ENCODE measurements at regions of chr17 and their contacts with region 1.

Region 1: GRCh38 chr17:59155439-59156182 is at the start of gene PRR11:
- DNase-seq: peak in 6 of 9 donors; percentile 62 to 99 (median 98)
- ATAC-seq: peak; percentile 91
- H3K4me3 ChIP-seq: peak within 1 kb of the TSS; percentile 89
- H3K4me3 Mint-ChIP-seq: no peak within 1 kb of the TSS
- H3K27ac ChIP-seq: peak within 1 kb of the TSS; percentile 75
- H3K27ac Mint-ChIP-seq: no peak within 1 kb of the TSS
- H3K4me1 ChIP-seq: peaks cover 10 to 13% of the 10 kb centered on the region in 2 donors
- H3K4me1 Mint-ChIP-seq: peaks cover 8 to 52% (median 36%) of the 10 kb centered on the region in 7 donors
- H3K27me3 ChIP-seq: no peaks in the 10 kb centered on the region
- H3K27me3 Mint-ChIP-seq: no peaks in the 10 kb centered on the region
- total RNA-seq, gene PRR11: 0.61 to 41.9 (median 1.00) TPM

Region 2: DNA sequence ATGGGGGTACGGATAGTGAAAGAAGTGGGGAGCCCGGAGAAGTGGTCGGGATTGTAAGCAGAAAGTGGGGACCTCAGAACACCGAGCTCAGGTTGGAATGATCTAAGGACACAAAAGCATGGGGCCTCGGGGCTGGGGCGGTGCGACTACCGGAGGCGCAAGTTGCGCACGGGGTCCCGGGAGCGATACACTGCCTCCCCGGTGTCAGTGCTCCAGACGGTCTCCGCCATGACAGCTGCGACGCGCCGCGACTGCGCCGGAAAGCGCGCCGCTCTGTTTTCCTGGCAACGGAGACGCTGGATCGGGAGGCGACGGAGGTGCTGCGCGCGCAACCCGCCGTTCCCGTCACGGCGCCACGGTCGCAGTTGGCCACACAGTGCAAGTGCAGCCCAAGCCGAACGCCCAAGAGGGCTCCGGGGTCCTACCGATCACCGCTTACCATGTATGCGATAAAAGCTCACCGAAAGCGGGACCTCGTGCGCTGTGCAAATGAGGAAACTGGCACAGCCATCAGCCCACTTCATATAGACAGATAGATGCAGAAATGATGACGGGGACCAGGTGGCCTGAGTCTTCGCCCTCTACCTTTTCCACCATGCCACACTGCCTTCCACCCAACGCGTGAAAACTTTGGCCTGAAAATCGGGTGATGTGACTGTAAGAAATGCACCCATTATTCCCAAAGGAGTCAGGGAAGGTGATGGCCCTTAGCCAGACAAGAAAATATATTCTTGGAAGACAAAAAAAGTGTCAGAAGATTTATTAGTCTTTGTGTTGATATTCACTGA is 936.4 kb before region 1 on chr17 and contains the start of gene MKS1:
- CTCF ChIA-PET with region 1: no interaction called
- POLR2A ChIA-PET with region 1: no interaction called
- intact Hi-C with region 1: loop called in 1 of 2 experiments (anchors 1 kb)
- DNase-seq: peak; percentile 90 to 96 (median 94)
- ATAC-seq: peak; percentile 98
- H3K4me3 ChIP-seq: peak within 1 kb of the TSS; percentile 68
- H3K4me3 Mint-ChIP-seq: peak within 1 kb of the TSS; percentile 86 to 96 (median 94)
- H3K27ac ChIP-seq: peak within 1 kb of the TSS; percentile 77
- H3K27ac Mint-ChIP-seq: peak within 1 kb of the TSS; percentile 92 to 98 (median 97)
- H3K4me1 ChIP-seq: peaks cover 8 to 9% of the 10 kb centered on the region in 2 donors
- H3K4me1 Mint-ChIP-seq: peaks cover 7 to 33% (median 23%) of the 10 kb centered on the region in 7 donors
- H3K27me3 ChIP-seq: no peaks in the 10 kb centered on the region
- H3K27me3 Mint-ChIP-seq: peaks cover 0 to 18% (median 0%) of the 10 kb centered on the region in 5 donors
- total RNA-seq, gene MKS1: 10.0 to 29.1 (median 19.7) TPM

Region 3: DNA sequence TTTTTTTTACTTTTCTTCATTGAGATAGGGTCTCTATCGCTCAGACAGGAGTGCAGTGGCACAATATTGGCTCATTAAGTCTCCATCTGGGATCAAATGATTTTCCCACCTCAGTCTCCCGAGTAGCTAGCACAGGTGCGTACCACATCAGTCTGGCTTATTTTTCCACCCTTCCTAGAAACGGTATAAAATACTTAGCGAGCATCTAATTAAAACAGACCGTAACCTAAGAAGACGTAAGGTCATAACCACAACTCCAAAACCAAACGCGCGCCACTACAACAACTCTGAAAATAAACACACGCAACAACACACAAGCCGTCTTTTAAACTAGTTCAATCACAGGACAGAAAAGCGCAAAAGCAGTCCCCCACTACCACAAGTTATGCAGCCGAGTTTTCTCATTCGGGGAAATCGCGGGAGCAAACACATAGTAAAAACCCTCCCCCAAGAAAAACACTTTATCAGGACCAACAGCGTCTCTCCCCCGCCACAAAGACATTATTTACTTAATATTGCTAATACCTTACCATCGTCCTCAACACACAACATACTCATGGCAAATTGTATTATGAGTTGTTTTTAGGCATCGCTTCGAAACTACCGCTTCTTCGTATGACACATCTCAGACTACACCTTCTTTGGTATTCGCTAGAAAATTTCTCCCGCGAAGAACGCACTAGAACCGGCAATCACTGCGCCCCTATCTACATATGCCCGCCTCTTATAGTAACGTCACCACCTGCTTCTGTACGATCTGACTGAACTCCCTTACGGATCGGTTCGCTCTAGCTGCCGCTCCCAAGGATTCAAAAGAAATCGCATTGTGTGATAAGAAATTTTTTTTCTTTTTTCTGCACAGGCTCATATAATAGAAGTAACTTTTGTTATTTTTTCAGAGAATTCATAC is 496.6 kb before region 1 on chr17:
- CTCF ChIA-PET with region 1: no interaction called
- POLR2A ChIA-PET with region 1: no interaction called
- intact Hi-C with region 1: loop called in 1 of 2 experiments (anchors 1 kb)
- DNase-seq: peak; percentile 47 to 89 (median 82)
- ATAC-seq: peak; percentile 88
- H3K4me3 ChIP-seq: peak overlapping the region; percentile 44
- H3K4me3 Mint-ChIP-seq: peak overlapping the region; percentile 83 to 93 (median 88)
- H3K27ac ChIP-seq: peak overlapping the region; percentile 82
- H3K27ac Mint-ChIP-seq: peak overlapping the region; percentile 94 to 100 (median 97)
- H3K4me1 ChIP-seq: no peaks in the 10 kb centered on the region
- H3K4me1 Mint-ChIP-seq: peaks cover 10 to 20% (median 15%) of the 10 kb centered on the region in 7 donors
- H3K27me3 ChIP-seq: no peaks in the 10 kb centered on the region
- H3K27me3 Mint-ChIP-seq: peaks cover 0 to 11% (median 0%) of the 10 kb centered on the region in 5 donors

Region 4: DNA sequence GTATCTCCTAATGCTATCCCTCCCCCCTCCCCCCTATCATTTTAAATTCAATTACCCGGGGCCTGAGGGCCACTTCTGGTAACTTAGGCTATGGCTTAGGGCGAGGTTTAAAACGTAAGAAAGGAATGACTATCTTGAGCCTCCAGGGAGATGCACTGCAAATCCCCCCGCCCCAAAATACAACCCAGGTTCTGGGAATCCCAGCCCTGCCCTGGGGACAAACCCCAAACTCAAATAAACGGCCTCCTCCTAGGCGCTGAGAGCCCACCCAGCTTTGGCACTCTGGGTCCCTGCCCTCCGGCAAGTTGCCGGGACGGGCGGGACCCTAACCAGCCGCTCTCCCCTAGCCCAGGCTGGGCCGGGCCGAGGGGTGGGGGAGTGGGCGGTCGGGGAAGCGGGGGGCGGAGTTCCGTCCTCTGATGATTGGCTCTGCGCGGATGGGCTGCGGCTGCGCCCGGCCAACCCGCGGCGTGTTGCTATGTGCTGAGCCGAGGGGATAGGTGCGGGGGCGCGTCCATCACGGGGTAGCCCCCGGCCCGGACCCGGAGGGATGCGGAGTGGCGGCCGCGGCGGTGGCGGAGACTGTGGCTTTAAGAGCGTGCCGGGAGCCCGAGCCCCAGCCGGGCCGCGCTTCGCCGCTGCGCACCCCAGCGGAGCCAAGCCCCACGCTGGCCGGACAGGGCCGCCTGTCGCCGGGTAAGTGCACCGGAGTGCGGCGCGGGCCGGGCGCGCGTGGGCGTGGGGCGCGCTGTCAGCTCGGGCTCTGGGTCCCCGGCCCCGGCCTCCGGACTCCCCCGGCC is 175.7 kb after region 1 on chr17 and contains the start of gene YPEL2:
- CTCF ChIA-PET with region 1: no interaction called
- POLR2A ChIA-PET with region 1: no interaction called
- intact Hi-C with region 1: loop called in 1 of 2 experiments (anchors 5 kb)
- DNase-seq: peak; percentile 77 to 92 (median 89)
- ATAC-seq: peak; percentile 96
- H3K4me3 ChIP-seq: peak within 1 kb of the TSS; percentile 67
- H3K4me3 Mint-ChIP-seq: peak within 1 kb of the TSS; percentile 89 to 96 (median 94)
- H3K27ac ChIP-seq: peak within 1 kb of the TSS; percentile 77
- H3K27ac Mint-ChIP-seq: peak within 1 kb of the TSS; percentile 77 to 98 (median 94)
- H3K4me1 ChIP-seq: peaks cover 30 to 55% of the 10 kb centered on the region in 2 donors
- H3K4me1 Mint-ChIP-seq: peaks cover 53 to 85% (median 79%) of the 10 kb centered on the region in 7 donors
- H3K27me3 ChIP-seq: no peaks in the 10 kb centered on the region
- H3K27me3 Mint-ChIP-seq: peaks cover 0 to 11% (median 0%) of the 10 kb centered on the region in 5 donors
- total RNA-seq, gene YPEL2: 10.6 to 52.0 (median 46.8) TPM

Region 5: DNA sequence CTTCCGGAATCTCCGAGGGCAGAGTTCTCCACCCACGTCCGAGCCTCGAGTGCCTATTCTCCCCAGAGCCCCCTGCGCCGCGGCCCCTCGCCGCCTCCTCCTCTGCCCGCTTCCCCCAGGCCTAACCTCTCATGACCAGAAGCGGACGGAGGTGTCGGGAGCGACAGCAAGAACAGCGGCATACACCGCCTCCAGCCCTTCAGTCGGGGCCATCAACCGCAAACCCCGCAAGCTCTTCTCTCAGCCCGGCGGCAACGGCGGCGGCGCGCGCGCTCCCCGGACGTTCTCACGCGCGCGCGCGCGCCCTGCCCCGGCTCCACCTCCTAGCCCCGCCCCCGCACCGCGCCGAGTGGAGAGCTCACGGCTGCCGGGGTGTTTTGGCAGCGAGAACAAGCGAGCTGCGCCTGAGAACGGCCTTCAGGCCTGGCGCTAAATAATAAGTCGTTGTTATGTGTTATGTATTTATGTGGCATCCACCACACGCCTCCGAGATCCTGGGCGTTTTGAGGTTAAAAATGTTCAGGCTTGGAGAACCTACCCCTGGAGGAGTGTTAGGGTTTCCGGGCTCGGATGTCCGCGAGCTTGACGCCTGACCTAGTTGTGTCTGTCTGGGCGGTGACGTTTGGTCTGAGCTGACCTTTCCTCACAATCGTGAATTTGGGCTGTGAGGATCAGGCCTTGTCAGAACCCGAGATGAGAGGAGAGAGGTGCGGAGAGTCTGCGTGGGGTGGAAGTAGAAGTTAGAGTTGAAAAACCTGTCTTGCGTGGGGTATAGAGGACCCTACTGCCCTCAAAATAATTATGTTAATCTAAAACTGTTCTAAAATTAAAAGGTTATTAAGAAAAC is 809.1 kb after region 1 on chr17 and contains the start of gene RNFT1:
- CTCF ChIA-PET with region 1: no interaction called
- POLR2A ChIA-PET with region 1: no interaction called
- intact Hi-C with region 1: loop called in 1 of 2 experiments (anchors 1 kb)
- DNase-seq: peak; percentile 78 to 97 (median 88)
- ATAC-seq: peak; percentile 97
- H3K4me3 ChIP-seq: peak within 1 kb of the TSS; percentile 92
- H3K4me3 Mint-ChIP-seq: peak within 1 kb of the TSS; percentile 86 to 99 (median 94)
- H3K27ac ChIP-seq: peak within 1 kb of the TSS; percentile 84
- H3K27ac Mint-ChIP-seq: peak within 1 kb of the TSS; percentile 88 to 99 (median 94)
- H3K4me1 ChIP-seq: peaks cover 16 to 18% of the 10 kb centered on the region in 2 donors
- H3K4me1 Mint-ChIP-seq: peaks cover 16 to 32% (median 23%) of the 10 kb centered on the region in 7 donors
- H3K27me3 ChIP-seq: no peaks in the 10 kb centered on the region
- H3K27me3 Mint-ChIP-seq: peaks cover 0 to 5% (median 0%) of the 10 kb centered on the region in 5 donors
- total RNA-seq, gene RNFT1: 22.8 to 45.8 (median 33.1) TPM